GM12878 (cell line): ENCODE measurements at regions of chr22 and their contacts with region 1.

Region 1: DNA sequence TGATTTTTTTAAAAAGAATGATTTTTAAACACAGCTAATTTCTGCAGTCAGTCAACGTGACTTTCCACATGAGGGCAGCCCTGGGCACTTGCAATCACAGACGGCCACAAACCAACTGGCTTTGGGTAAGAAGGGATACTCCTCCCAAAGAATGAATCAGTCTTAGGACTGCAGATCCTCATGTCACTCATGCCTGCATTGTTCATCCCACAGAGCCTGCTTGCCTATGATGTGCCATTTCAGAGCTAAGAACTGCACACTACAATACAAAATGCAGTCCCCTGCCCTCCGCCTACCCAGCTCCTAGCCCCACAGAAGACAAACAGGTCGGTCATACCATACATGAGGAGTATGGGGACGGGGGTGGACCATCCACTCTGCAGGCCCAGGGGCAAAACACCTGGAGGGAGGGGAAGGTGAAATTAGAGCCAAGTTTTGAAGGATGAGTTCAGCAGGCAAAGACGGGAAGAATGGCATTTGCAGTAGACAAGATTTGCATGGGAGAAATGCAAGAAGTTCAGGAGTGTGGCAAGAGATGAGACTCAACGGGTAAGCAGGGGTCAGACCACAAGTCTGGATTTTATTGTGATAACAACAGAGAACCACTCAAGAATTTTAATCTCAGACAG is 24.7 kb downstream of the PACSIN2 start:
- DNase-seq: no peak
- ATAC-seq: no peak
- H3K4me3 ChIP-seq: no peak overlapping the region
- H3K27ac ChIP-seq: no peak overlapping the region
- H3K4me1 ChIP-seq: peaks cover 21% of the 10 kb centered on the region
- H3K27me3 ChIP-seq: no peaks in the 10 kb centered on the region
- CTCF ChIP-seq: no peak
- EP300 ChIP-seq: no peak
- POLR2A ChIP-seq: no peak
- RAD21 ChIP-seq: 0 out of 2 replicates have a peak, but pooled peaks have one; percentile 10

Region 2: DNA sequence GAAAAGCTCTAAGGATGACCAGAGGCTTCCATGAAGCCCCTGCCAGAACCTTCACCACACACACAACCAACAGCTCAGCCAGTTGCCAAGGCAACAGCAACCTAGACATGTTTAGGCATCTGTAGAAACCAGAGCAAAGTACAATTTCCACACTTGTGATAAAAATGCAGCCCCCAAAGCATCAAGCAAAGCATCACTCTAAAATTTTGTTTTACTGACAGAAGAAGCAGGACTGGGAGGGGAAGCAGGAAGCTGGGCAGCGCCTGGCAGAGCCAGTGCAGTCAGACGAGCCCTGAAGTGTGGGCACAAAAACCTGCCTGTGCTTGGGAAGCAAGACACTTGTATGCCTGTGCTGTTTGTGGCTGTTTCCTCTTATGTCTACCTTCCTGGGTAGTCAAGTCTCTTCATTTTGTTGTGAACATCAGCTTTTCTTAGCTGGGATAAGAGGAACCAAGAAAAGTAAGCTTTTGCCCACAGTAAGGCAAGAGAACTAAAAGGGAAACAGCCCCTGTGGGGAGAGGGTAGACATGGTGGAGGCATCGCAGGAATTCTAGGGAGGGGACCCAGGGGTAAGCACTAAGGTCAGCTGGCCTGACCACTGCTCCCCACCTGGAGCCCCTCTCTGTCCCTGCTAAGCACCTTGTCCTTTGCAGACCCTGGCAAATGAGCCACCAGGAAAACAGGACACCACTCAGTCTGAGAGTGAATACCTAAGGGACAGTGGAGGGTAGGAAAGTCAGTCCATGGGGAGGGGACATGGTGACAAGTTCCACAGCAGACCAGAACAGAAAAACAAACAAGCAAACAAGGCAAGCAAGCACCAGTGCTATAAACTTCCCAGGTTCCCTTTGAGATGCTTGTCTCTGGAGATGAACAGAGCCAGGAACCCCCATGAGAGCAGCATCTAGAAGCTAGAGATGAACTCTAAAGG is 11.3 kb after region 1 on chr22:
- CTCF ChIA-PET with region 1: interaction called, 4 read pairs
- POLR2A ChIA-PET with region 1: interaction called, 9 read pairs
- RAD21 ChIA-PET with region 1: interaction called, 17 read pairs
- SMC1A ChIA-PET with region 1: interaction called, 8 read pairs
- in situ Hi-C with region 1: no loop called
- intact Hi-C with region 1: no loop called
- DNase-seq: no peak
- ATAC-seq: peak; percentile 67
- H3K4me3 ChIP-seq: peak overlapping the region; percentile 22
- H3K27ac ChIP-seq: peak overlapping the region; percentile 77
- H3K4me1 ChIP-seq: peaks cover 73% of the 10 kb centered on the region
- H3K27me3 ChIP-seq: no peaks in the 10 kb centered on the region
- CTCF ChIP-seq: no peak
- EP300 ChIP-seq: no peak
- POLR2A ChIP-seq: no peak
- RAD21 ChIP-seq: no peak